ENCODE measurements at regions of chr9 and their contacts with region 1.

Region 1: GRCh38 chr9:77166193-77166592 is 11.1 kb upstream of the VPS13A start:
- DNase-seq: no peak
- H3K4me3 ChIP-seq: no peak overlapping the region
- H3K27ac ChIP-seq: no peak overlapping the region; the same call in 1 of the 2 replicates
- H3K4me1 ChIP-seq: peaks cover 0 to 4% (median 3%) of the 10 kb centered on the region in 4 experiments; a peak in 2 of 7 replicates
- H3K27me3 ChIP-seq: no peaks in the 10 kb centered on the region
- CTCF ChIP-seq: no peak
- EP300 ChIP-seq: no peak
- POLR2A ChIP-seq: no peak
- RAD21 ChIP-seq: no peak

Region 2: GRCh38 chr9:77018058-77018968 is 147.9 kb before region 1 on chr9:
- CTCF ChIA-PET with region 1: interaction called, 10 read pairs
- POLR2A ChIA-PET with region 1: no interaction called
- DNase-seq: no peak
- H3K4me3 ChIP-seq: peak overlapping the region; percentile 33 to 65 (median 56)
- H3K27ac ChIP-seq: no peak overlapping the region
- H3K4me1 ChIP-seq: peaks cover 18 to 58% (median 39%) of the 10 kb centered on the region in 4 experiments
- H3K27me3 ChIP-seq: peaks cover 86 to 99% (median 98%) of the 10 kb centered on the region in 4 experiments
- CTCF ChIP-seq: no peak
- EP300 ChIP-seq: no peak
- POLR2A ChIP-seq: no peak
- RAD21 ChIP-seq: no peak

Region 3: GRCh38 chr9:77177161-77177893 is 11.1 kb after region 1 on chr9 and contains the start of gene VPS13A:
- CTCF ChIA-PET with region 1: interaction called, 18 read pairs
- POLR2A ChIA-PET with region 1: interaction called, 3 read pairs
- DNase-seq: peak; percentile 92 to 99
- H3K4me3 ChIP-seq: peak within 1 kb of the TSS; percentile 75 to 84 (median 83)
- H3K27ac ChIP-seq: peak within 1 kb of the TSS; percentile 63; the same call in 1 of the 2 replicates
- H3K4me1 ChIP-seq: peaks cover 2 to 6% (median 3%) of the 10 kb centered on the region in 4 experiments; a peak in 6 of 7 replicates
- H3K27me3 ChIP-seq: no peaks in the 10 kb centered on the region
- CTCF ChIP-seq: peak in 2 of 3 experiments; percentile 3 to 16; a peak in 2 of 4 replicates
- EP300 ChIP-seq: no peak
- POLR2A ChIP-seq: peak in 1 of 2 experiments; percentile 68; a peak in 2 of 3 replicates
- RAD21 ChIP-seq: no peak; a peak in 1 of 4 replicates
- total RNA-seq, gene VPS13A: 30.0 and 36.5 TPM in 2 replicates

Region 4: GRCh38 chr9:77215874-77216273 is 49.7 kb after region 1 on chr9:
- CTCF ChIA-PET with region 1: interaction called, 19 read pairs
- POLR2A ChIA-PET with region 1: no interaction called
- DNase-seq: no peak
- H3K4me3 ChIP-seq: no peak overlapping the region
- H3K27ac ChIP-seq: no peak overlapping the region
- H3K4me1 ChIP-seq: no peaks in the 10 kb centered on the region
- H3K27me3 ChIP-seq: no peaks in the 10 kb centered on the region
- CTCF ChIP-seq: peak in 1 of 3 experiments; percentile 43; a peak in 2 of 4 replicates
- EP300 ChIP-seq: no peak
- POLR2A ChIP-seq: no peak
- RAD21 ChIP-seq: peak; percentile 58